GM12878 (cell line): ENCODE measurements at regions of chr3 and their contacts with region 1.

Region 1: GRCh38 chr3:162978136-162978535 is 1481.5 kb downstream of the OTOL1 start:
- DNase-seq: no peak
- ATAC-seq: no peak
- H3K4me3 ChIP-seq: no peak overlapping the region
- H3K27ac ChIP-seq: no peak overlapping the region
- H3K4me1 ChIP-seq: no peaks in the 10 kb centered on the region
- H3K27me3 ChIP-seq: no peaks in the 10 kb centered on the region
- CTCF ChIP-seq: no peak
- EP300 ChIP-seq: no peak
- POLR2A ChIP-seq: no peak
- RAD21 ChIP-seq: no peak

Region 2: GRCh38 chr3:163024680-163025079 is 46.5 kb after region 1 on chr3:
- CTCF ChIA-PET with region 1: no interaction called
- POLR2A ChIA-PET with region 1: no interaction called
- RAD21 ChIA-PET with region 1: no interaction called
- SMC1A ChIA-PET with region 1: no interaction called
- in situ Hi-C with region 1: no loop called
- intact Hi-C with region 1: loop called (anchors 5 kb)
- DNase-seq: no peak
- ATAC-seq: no peak
- H3K4me3 ChIP-seq: no peak overlapping the region
- H3K27ac ChIP-seq: no peak overlapping the region
- H3K4me1 ChIP-seq: no peaks in the 10 kb centered on the region
- H3K27me3 ChIP-seq: no peaks in the 10 kb centered on the region
- CTCF ChIP-seq: no peak
- EP300 ChIP-seq: no peak
- POLR2A ChIP-seq: no peak
- RAD21 ChIP-seq: no peak

Region 3: GRCh38 chr3:163196815-163197374 is 218.8 kb after region 1 on chr3:
- CTCF ChIA-PET with region 1: no interaction called
- POLR2A ChIA-PET with region 1: no interaction called
- RAD21 ChIA-PET with region 1: no interaction called
- SMC1A ChIA-PET with region 1: no interaction called
- in situ Hi-C with region 1: no loop called
- intact Hi-C with region 1: no loop called
- DNase-seq: no peak
- ATAC-seq: no peak
- H3K4me3 ChIP-seq: no peak overlapping the region
- H3K27ac ChIP-seq: no peak overlapping the region
- H3K4me1 ChIP-seq: no peaks in the 10 kb centered on the region
- H3K27me3 ChIP-seq: no peaks in the 10 kb centered on the region
- CTCF ChIP-seq: no peak
- EP300 ChIP-seq: no peak
- POLR2A ChIP-seq: no peak
- RAD21 ChIP-seq: no peak